K562 (cell line): ENCODE measurements at regions of chrX and their contacts with region 1.

Region 1: DNA sequence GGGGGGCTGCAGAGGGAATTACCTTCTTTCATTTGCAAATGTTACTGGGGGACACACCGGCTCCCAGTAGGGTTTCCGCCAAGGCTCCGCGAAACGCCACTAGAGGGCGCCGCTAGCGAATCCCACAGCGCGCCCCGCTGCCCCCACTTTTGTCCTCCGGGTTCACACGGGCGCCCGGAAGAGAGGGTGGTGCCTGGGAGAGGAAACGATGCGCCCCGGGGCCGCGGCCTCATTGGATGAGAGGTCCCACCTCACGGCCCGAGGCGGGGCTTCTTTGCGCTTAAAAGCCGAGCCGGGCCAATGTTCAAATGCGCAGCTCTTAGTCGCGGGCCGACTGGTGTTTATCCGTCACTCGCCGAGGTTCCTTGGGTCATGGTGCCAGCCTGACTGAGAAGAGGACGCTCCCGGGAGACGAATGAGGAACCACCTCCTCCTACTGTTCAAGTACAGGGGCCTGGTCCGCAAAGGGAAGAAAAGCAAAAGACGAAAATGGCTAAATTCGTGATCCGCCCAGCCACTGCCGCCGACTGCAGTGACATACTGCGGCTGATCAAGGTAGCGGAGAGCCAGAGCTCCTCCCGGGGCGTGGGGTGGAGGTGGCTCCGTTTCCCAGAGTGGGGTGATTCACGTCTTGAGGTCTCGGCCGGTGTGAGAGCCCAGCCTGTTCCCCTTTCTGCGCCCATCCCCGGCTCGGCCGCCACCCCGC is at the start of gene SAT1:
- DNase-seq: peak; percentile 89 to 97 (median 91)
- ATAC-seq: peak; percentile 94
- H3K4me3 ChIP-seq: peak within 1 kb of the TSS; percentile 69
- H3K27ac ChIP-seq: peak within 1 kb of the TSS; percentile 92
- H3K4me1 ChIP-seq: peaks cover 10 to 11% of the 10 kb centered on the region in 2 experiments; a peak in 3 of 5 replicates
- H3K27me3 ChIP-seq: no peaks in the 10 kb centered on the region
- CTCF ChIP-seq: peak; percentile 76 to 84 (median 83)
- EP300 ChIP-seq: 0 out of 2 replicates have a peak, but pooled peaks have one; percentile 21
- POLR2A ChIP-seq: peak; percentile 99
- RAD21 ChIP-seq: peak; percentile 83 to 88
- polyA plus RNA-seq, gene SAT1: 161 to 194 TPM

Region 2: GRCh38 chrX:23742697-23743622 is 40.1 kb before region 1 on chrX and contains the start of gene ACOT9:
- CTCF ChIA-PET with region 1: no interaction called
- POLR2A ChIA-PET with region 1: no interaction called
- in situ Hi-C with region 1: no loop called
- intact Hi-C with region 1: loop called (anchors 5 kb)
- DNase-seq: peak; percentile 93 to 95 (median 94)
- ATAC-seq: peak; percentile 99
- H3K4me3 ChIP-seq: peak within 1 kb of the TSS; percentile 77
- H3K27ac ChIP-seq: peak within 1 kb of the TSS; percentile 70
- H3K4me1 ChIP-seq: peaks cover 9 to 15% of the 10 kb centered on the region in 2 experiments; a peak in 4 of 5 replicates
- H3K27me3 ChIP-seq: no peaks in the 10 kb centered on the region
- CTCF ChIP-seq: no peak
- EP300 ChIP-seq: no peak
- POLR2A ChIP-seq: peak; percentile 76
- RAD21 ChIP-seq: no peak
- polyA plus RNA-seq, gene ACOT9: 50.0 to 80.9 TPM

Region 3: DNA sequence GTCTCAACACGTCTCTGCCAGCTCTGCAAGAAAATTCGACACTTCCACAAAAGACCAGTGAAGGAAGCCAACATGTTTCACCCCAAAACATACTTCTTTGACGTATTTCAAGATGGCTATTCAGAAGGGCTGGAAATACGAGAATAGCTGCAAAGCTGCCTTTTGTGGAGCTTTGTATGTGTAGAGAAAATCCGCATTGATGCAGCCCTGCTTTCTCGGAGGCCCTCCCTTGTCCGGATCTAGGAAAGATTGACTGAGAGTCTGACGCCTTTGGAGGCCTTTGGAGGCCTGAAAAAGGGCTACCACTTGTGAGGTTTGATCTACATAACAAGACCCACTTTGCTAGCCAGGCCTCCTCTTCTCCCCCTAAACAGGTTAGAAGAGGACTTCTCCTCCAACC is 12.2 kb after region 1 on chrX:
- CTCF ChIA-PET with region 1: no interaction called
- POLR2A ChIA-PET with region 1: interaction called, 12 read pairs
- in situ Hi-C with region 1: no loop called
- intact Hi-C with region 1: no loop called
- DNase-seq: no peak
- ATAC-seq: no peak
- H3K4me3 ChIP-seq: no peak overlapping the region
- H3K27ac ChIP-seq: no peak overlapping the region
- H3K4me1 ChIP-seq: peaks cover 0 to 5% of the 10 kb centered on the region in 2 experiments; a peak in 1 of 5 replicates
- H3K27me3 ChIP-seq: no peaks in the 10 kb centered on the region
- CTCF ChIP-seq: no peak
- EP300 ChIP-seq: no peak
- POLR2A ChIP-seq: no peak
- RAD21 ChIP-seq: no peak

Region 4: GRCh38 chrX:23883737-23884354 is 100.8 kb after region 1 on chrX:
- CTCF ChIA-PET with region 1: no interaction called
- POLR2A ChIA-PET with region 1: interaction called, 6 read pairs
- in situ Hi-C with region 1: no loop called
- intact Hi-C with region 1: loop called (anchors 5 kb)
- DNase-seq: peak; percentile 29 to 74 (median 52)
- ATAC-seq: peak; percentile 88
- H3K4me3 ChIP-seq: no peak overlapping the region
- H3K27ac ChIP-seq: peak overlapping the region; percentile 85
- H3K4me1 ChIP-seq: peaks cover 13 to 18% of the 10 kb centered on the region in 2 experiments
- H3K27me3 ChIP-seq: no peaks in the 10 kb centered on the region
- CTCF ChIP-seq: no peak
- EP300 ChIP-seq: no peak
- POLR2A ChIP-seq: no peak
- RAD21 ChIP-seq: no peak

Region 5: DNA sequence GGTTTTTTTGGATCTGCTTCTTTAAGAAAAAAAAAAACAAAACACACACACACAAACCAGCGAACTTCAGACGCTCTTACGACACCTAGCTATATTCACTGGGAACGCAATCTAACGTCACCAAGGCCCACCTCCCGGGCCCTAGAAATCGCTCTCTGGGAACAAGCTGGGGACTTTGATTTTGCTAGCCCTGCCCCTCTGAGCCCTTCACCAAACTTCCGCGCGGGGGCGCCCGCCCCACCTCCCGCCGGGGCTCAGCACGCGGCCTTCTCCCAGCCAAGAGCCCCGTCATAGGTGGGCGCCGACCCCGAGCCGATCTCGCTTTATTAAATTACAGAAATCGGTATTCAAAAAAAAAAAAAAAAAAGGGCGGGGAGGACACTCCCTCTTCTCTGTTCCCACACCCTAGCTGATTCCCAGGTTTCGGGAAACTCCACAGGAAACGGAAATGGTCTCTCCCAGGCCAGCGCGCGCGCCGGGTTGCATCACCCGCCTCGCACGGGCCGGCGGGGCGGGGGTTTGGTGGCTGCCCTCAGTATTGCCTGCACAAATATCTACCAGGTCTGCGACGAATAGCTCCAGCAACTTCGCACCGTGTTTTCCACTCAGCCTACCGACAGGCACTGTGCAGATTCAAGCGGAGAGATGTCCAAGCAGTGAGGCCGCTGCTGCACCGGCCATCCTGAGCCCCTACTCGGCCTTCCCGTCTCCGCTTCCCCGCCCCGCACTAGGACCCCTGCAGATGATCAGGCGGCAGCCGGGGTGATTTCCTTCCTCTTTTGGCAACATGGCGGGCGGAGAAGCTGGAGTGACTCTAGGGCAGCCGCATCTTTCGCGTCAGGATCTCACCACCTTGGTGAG is 271.4 kb after region 1 on chrX and contains the start of gene EIF2S3:
- CTCF ChIA-PET with region 1: no interaction called
- POLR2A ChIA-PET with region 1: interaction called, 6 read pairs
- in situ Hi-C with region 1: no loop called
- intact Hi-C with region 1: loop called (anchors 2 kb)
- DNase-seq: peak; percentile 79 to 95 (median 82)
- ATAC-seq: peak; percentile 95
- H3K4me3 ChIP-seq: no peak within 1 kb of the TSS
- H3K27ac ChIP-seq: no peak within 1 kb of the TSS; the same call in 1 of the 3 replicates
- H3K4me1 ChIP-seq: peaks cover 4 to 6% of the 10 kb centered on the region in 2 experiments; a peak in 2 of 5 replicates
- H3K27me3 ChIP-seq: no peaks in the 10 kb centered on the region
- CTCF ChIP-seq: peak; percentile 87 to 88 (median 88)
- EP300 ChIP-seq: peak; percentile 20; the same call in 1 of the 2 replicates
- POLR2A ChIP-seq: peak; percentile 94
- RAD21 ChIP-seq: peak; percentile 51 to 63
- polyA plus RNA-seq, gene EIF2S3: 148 to 192 TPM